GM10248 (cell line): ENCODE measurements at regions of chr5 and their contacts with region 1.

Region 1: DNA sequence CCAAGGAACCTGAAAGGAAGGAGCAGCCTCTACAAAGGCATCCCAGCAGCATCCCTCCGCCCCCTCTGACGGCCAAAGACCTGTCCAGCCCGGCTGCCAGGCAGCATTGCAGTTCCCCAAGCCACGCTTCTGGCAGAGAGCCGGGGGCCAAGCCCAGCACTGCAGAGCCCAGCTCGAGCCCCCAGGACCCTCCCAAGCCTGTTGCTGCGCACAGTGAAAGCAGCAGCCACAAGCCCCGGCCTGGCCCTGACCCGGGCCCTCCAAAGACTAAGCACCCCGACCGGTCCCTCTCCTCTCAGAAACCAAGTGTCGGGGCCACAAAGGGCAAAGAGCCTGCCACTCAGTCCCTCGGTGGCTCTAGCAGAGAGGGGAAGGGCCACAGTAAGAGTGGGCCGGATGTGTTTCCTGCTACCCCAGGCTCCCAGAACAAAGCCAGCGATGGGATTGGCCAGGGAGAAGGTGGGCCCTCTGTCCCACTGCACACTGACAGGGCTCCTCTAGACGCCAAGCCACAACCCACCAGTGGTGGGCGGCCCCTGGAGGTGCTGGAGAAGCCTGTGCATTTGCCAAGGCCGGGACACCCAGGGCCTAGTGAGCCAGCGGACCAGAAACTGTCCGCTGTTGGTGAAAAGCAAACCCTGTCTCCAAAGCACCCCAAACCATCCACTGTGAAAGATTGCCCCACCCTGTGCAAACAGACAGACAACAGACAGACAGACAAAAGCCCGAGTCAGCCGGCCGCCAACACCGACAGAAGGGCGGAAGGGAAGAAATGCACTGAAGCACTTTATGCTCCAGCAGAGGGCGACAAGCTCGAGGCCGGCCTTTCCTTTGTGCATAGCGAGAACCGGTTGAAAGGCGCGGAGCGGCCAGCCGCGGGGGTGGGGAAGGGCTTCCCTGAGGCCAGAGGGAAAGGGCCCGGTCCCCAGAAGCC is 30.8 kb downstream of the CD180 start:
- DNase-seq: peak; percentile 89
- CTCF ChIP-seq: peak; percentile 84

Region 2: GRCh38 chr5:66701244-66701643 is 464.5 kb before region 1 on chr5:
- CTCF ChIA-PET with region 1: no interaction called
- POLR2A ChIA-PET with region 1: no interaction called
- DNase-seq: peak; percentile 32
- CTCF ChIP-seq: no peak

Region 3: DNA sequence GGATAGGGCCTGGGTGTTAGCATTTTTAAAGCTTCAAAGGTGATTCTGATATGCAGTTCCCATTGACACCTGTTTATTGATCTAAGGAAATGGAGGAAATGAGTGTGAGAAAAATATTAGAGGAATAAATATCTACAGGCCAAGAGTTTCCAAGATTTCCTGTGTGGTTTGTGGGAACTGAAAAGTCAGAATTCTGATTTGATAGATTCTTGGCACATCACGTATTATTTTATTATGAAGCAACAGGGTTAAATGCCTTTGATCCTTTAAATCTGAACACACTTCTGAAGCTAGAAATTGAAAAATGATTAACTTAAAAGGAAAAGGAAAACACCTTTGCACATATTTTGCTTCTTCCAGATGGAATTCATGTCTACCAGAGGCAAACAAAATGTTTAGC is 82.9 kb before region 1 on chr5:
- CTCF ChIA-PET with region 1: no interaction called
- POLR2A ChIA-PET with region 1: no interaction called
- DNase-seq: no peak
- CTCF ChIP-seq: no peak

Region 4: DNA sequence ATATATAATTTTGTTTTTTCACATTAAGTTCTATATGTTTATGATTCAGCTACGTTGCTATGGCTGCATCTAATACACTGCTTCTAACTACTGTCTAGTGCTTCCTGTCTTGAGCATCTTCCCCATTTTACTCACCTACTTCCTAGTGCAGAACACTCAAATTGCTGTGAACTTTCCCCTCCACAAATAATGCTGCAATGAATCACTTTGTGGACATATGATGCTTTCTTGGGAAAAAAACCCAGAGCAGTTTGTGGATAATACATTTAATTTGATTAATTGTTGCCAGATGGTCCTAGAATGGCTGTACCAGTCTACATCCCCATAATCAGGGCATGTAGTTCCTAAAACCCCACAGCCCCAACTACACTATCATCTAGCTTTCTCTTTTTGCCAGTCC is 12.3 kb after region 1 on chr5:
- CTCF ChIA-PET with region 1: interaction called, 39 read pairs
- POLR2A ChIA-PET with region 1: no interaction called
- DNase-seq: no peak
- CTCF ChIP-seq: no peak

Region 5: DNA sequence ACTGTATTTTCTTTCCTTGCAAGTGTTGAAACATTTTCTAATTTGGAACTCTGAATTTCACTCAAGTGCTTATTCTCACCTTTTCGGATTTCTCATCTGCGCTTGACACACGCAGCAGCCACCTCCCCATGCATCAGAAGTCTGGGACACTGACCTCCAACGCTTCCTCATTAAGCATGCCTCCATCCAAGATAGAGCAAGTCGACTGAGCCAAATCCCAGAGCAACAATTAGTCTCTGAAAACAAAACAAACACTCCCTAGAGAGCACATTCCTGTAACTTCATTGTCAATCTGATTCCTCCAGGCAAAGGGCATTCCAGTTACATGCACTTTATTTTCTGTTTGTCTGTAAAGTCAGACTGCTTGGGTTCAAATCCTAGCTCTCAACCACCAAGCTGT is 25.1 kb after region 1 on chr5:
- CTCF ChIA-PET with region 1: interaction called, 311 read pairs
- POLR2A ChIA-PET with region 1: no interaction called
- DNase-seq: no peak
- CTCF ChIP-seq: no peak

Region 6: GRCh38 chr5:67209142-67209771 is 43.5 kb after region 1 on chr5:
- CTCF ChIA-PET with region 1: interaction called, 311 read pairs
- POLR2A ChIA-PET with region 1: no interaction called
- DNase-seq: peak; percentile 69
- CTCF ChIP-seq: peak; percentile 68

Region 7: GRCh38 chr5:67537439-67538148 is 371.8 kb after region 1 on chr5:
- CTCF ChIA-PET with region 1: no interaction called
- POLR2A ChIA-PET with region 1: no interaction called
- DNase-seq: no peak
- CTCF ChIP-seq: no peak